Left ventricle myocardium inferior (tissue), 1 donor: ENCODE measurements at regions of chr11 and their contacts with region 1.

Region 1: GRCh38 chr11:114340311-114341131 is 44.3 kb downstream of the NNMT start:
- DNase-seq: peak; percentile 20
- H3K4me3 ChIP-seq: peak overlapping the region; percentile 44
- H3K27ac ChIP-seq: peak overlapping the region; percentile 54
- H3K4me1 ChIP-seq: peaks cover 13% of the 10 kb centered on the region
- H3K27me3 ChIP-seq: no peaks in the 10 kb centered on the region
- CTCF ChIP-seq: peak; percentile 86

Region 2: GRCh38 chr11:114758627-114759026 is 418.1 kb after region 1 on chr11:
- intact Hi-C with region 1: loop called (anchors 10 kb)
- DNase-seq: no peak
- H3K4me3 ChIP-seq: no peak overlapping the region
- H3K27ac ChIP-seq: no peak overlapping the region
- H3K4me1 ChIP-seq: no peaks in the 10 kb centered on the region
- H3K27me3 ChIP-seq: peaks cover 18% of the 10 kb centered on the region
- CTCF ChIP-seq: no peak